PC-9 (cell line): ENCODE measurements at regions of chr3 and their contacts with region 1.

Region 1: GRCh38 chr3:6723205-6723604 is 137.7 kb upstream of the GRM7 start:
- DNase-seq: no peak
- H3K4me3 ChIP-seq: no peak overlapping the region
- H3K27ac ChIP-seq: no peak overlapping the region
- H3K4me1 ChIP-seq: no peaks in the 10 kb centered on the region
- H3K27me3 ChIP-seq: no peaks in the 10 kb centered on the region
- CTCF ChIP-seq: no peak

Region 2: GRCh38 chr3:6351752-6352151 is 371.5 kb before region 1 on chr3:
- CTCF ChIA-PET with region 1: no interaction called
- POLR2A ChIA-PET with region 1: no interaction called
- intact Hi-C with region 1: no loop called
- DNase-seq: no peak
- H3K4me3 ChIP-seq: no peak overlapping the region
- H3K27ac ChIP-seq: no peak overlapping the region
- H3K4me1 ChIP-seq: no peaks in the 10 kb centered on the region
- H3K27me3 ChIP-seq: no peaks in the 10 kb centered on the region
- CTCF ChIP-seq: no peak

Region 3: GRCh38 chr3:6567241-6567640 is 156.0 kb before region 1 on chr3:
- CTCF ChIA-PET with region 1: no interaction called
- POLR2A ChIA-PET with region 1: no interaction called
- intact Hi-C with region 1: no loop called
- DNase-seq: no peak
- H3K4me3 ChIP-seq: no peak overlapping the region
- H3K27ac ChIP-seq: no peak overlapping the region
- H3K4me1 ChIP-seq: no peaks in the 10 kb centered on the region
- H3K27me3 ChIP-seq: no peaks in the 10 kb centered on the region
- CTCF ChIP-seq: no peak

Region 4: DNA sequence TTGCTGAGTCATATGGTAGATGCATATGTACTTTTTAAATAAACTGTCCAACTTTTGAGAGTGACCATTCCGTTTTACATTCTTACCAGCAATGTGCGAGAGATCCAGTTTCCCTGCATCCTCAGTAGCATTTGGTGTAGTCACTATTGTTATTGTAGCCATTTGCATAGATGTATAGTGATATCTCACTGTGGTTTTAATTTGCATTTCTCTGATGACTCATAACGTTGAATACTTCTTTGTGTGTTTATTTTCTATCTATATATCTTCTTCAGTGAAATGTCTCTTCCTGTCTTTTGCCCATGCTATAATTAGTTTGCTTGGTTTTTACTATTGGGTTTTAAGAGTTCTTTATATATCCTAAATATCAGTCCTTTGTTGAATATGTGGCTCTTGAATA is 118.0 kb before region 1 on chr3:
- CTCF ChIA-PET with region 1: no interaction called
- POLR2A ChIA-PET with region 1: no interaction called
- intact Hi-C with region 1: no loop called
- DNase-seq: no peak
- H3K4me3 ChIP-seq: no peak overlapping the region
- H3K27ac ChIP-seq: no peak overlapping the region
- H3K4me1 ChIP-seq: no peaks in the 10 kb centered on the region
- H3K27me3 ChIP-seq: no peaks in the 10 kb centered on the region
- CTCF ChIP-seq: no peak

Region 5: GRCh38 chr3:7290077-7290825 is 567.0 kb after region 1 on chr3:
- CTCF ChIA-PET with region 1: interaction called, 10 read pairs
- POLR2A ChIA-PET with region 1: no interaction called
- intact Hi-C with region 1: no loop called
- DNase-seq: no peak
- H3K4me3 ChIP-seq: no peak overlapping the region
- H3K27ac ChIP-seq: no peak overlapping the region
- H3K4me1 ChIP-seq: no peaks in the 10 kb centered on the region
- H3K27me3 ChIP-seq: no peaks in the 10 kb centered on the region
- CTCF ChIP-seq: no peak